Panc1 (cell line): ENCODE measurements at regions of chr12 and their contacts with region 1.

Region 1: DNA sequence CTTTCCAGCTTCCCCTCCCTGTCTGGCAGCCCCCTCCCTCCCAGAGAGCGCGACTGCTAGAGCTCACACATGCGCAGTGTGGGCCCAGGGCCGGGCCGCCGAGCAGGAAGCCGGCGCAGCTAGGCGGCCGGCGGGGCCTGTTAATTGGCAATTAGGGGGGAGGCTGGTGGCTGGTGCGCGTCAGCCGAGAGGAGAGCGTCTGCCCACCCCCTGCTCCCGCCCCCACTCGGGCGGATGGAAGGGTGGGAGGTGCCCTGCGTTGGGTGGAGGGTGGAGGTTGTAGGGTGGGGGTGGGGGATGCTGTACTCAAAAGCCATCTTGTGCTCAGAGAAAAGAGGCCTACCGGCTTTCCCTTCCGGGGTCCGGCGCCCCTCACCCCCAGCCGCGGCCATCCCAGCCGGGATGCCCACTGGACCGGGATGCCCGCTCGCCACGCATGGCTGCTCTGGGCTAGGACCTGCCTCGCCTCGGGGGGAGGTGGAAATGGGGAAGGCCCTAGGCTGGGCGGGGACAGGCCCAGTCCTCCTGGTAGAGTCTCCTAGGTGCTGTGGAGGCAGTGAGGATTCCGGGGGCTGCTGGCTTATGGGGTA is 9.2 kb downstream of the HOXC8 start:
- DNase-seq: peak; percentile 89
- ATAC-seq: peak; percentile 72
- H3K4me3 ChIP-seq: peak overlapping the region; percentile 72 to 91
- H3K27ac ChIP-seq: peak overlapping the region; percentile 94
- H3K4me1 ChIP-seq: peaks cover 60% of the 10 kb centered on the region
- H3K27me3 ChIP-seq: no peaks in the 10 kb centered on the region
- CTCF ChIP-seq: no peak; the same call in 1 of the 2 replicates

Region 2: DNA sequence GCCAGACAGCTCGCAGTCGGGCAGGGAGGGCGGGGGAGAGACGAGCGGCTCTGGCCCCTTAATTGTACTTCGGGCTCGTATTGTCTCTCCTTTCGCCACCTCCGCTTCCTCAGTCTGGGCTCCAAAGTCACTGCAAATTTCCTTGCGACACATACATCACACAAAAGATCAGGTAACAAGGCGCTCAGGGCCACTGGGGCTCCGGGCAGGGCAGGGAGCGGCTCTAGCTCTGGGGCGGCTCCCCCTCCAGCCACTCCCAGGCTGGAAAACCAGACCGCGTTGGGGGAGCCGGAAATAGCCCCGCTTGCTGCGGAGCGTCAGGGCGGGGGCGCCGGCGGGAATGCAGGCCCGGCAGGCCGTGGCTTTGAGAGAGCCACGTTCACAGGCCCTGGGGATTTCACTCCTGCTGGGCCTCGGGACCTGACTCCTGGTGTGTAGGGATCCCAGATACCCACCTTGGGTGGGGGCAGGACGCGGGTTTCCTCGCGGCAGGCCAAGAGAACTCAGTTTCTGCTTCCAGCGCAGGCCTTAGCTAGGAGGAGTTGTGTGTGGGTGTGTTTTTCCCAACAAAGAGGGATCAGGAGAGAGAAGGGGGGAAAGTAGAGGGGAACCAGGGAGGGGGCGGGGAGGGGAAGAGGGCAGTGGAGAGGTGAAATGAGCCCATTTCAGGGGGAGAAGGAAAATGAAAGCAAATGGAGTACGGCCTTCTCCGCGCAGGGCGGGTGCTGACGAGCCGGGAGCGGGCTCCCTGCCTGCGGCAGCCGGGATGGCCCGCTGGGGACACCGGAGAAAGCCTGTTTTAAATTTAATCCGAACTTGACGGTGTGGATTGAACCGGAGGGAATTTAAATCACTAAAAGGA is 22.4 kb before region 1 on chr12:
- CTCF ChIA-PET with region 1: interaction called, 3 read pairs
- POLR2A ChIA-PET with region 1: interaction called, 10 read pairs
- in situ Hi-C with region 1: no loop called
- intact Hi-C with region 1: no loop called
- DNase-seq: no peak
- ATAC-seq: peak; percentile 15
- H3K4me3 ChIP-seq: peak overlapping the region; percentile 66 to 67
- H3K27ac ChIP-seq: peak overlapping the region; percentile 99
- H3K4me1 ChIP-seq: peaks cover 11% of the 10 kb centered on the region
- H3K27me3 ChIP-seq: no peaks in the 10 kb centered on the region
- CTCF ChIP-seq: no peak

Region 3: DNA sequence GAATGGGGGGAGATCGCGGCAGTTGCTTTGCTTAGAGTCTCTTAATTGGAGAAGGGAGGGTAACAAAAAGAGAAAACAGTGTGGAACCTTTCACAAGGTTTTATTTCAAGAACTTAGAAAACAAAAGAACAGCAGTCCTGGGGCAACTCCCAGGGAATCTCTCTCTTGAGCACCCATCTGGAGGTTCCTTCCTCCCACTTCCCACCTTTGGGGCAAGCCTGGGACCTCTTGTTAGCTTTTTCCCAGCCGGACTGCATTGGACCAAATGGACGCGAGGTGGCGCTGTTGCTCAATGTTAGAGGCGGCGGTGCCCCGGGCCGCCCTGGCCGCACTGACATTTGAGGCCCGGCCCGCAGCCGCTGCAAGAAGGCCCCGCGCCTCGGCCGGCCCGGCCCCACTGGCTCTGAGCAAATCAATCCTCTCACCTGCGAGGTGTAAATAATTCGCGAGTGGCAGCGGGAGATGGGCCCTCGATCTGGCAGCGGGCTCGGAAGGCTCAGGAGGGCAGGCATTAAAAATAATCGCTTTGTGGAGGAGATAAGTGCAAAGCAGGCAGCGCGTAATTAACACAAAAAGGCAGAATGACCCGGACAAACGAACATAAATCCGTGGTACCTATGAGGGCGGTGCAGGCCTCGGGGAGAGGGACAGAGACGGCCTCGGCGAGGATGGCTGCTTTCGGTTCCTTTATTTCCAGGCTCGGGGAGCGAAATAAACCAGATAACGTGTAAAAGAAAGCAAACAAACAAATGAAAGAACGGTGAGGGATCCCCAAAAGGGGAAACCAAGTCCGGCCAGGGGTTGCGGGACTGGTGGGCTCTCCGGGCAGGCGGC is 11.9 kb before region 1 on chr12:
- CTCF ChIA-PET with region 1: interaction called, 5 read pairs
- POLR2A ChIA-PET with region 1: interaction called, 5 read pairs
- in situ Hi-C with region 1: no loop called
- intact Hi-C with region 1: loop called (anchors 1 kb)
- DNase-seq: no peak
- ATAC-seq: peak; percentile 56
- H3K4me3 ChIP-seq: peak overlapping the region; percentile 47 to 66
- H3K27ac ChIP-seq: peak overlapping the region; percentile 99
- H3K4me1 ChIP-seq: peaks cover 44% of the 10 kb centered on the region
- H3K27me3 ChIP-seq: no peaks in the 10 kb centered on the region
- CTCF ChIP-seq: peak; percentile 91

Region 4: DNA sequence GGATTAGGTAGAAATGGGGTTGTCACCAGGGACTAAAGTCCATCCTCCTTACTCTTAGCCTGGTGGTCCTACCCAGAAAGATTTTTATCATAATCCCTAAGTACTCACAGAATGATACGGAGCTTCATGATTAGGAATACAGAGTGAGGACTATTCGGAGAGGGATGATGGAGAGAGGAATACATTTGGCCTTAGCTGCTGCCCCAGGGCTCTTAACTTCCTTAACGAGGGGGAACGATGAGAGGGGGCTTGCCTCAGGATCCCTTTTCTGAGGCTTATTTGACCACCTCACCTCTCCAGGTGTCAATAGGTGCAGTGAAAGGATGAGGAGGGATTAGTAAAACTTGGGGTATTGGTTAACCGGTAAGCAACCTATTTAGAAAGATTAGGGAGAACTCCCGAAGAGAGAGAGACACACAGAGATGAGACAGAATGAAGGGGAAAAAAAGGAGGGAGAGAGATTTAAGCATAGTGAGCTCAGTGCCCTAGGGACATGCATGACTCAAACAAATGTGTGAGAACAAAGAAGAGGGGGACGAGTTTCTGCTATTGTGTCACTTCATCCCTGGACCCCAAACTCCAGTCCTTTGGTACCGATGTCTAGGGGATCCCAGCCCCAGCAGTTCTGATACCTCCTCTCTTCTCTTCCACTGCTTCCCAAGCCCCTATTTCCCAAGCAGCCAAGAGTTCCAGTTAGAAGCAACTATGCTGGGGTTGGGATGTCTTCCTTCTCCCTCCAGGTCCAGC is 281.7 kb after region 1 on chr12:
- CTCF ChIA-PET with region 1: no interaction called
- POLR2A ChIA-PET with region 1: interaction called, 14 read pairs
- in situ Hi-C with region 1: no loop called
- intact Hi-C with region 1: no loop called
- DNase-seq: no peak
- ATAC-seq: no peak
- H3K4me3 ChIP-seq: no peak overlapping the region
- H3K27ac ChIP-seq: no peak overlapping the region
- H3K4me1 ChIP-seq: peaks cover 14% of the 10 kb centered on the region
- H3K27me3 ChIP-seq: peaks cover 13% of the 10 kb centered on the region; the same call in 1 of the 2 replicates
- CTCF ChIP-seq: no peak